ENCODE measurements at regions of chr1 and their contacts with region 1.

Region 1: GRCh38 chr1:45011837-45012638 is at the start of gene UROD:
- DNase-seq: peak; percentile 77 to 96 (median 86)
- ATAC-seq: peak; percentile 83
- H3K4me3 ChIP-seq: peak within 1 kb of the TSS; percentile 56 to 82
- H3K4me3 Mint-ChIP-seq: peak within 1 kb of the TSS; percentile 89
- H3K27ac ChIP-seq: peak within 1 kb of the TSS; percentile 61 to 77
- H3K27ac Mint-ChIP-seq: peak within 1 kb of the TSS; percentile 95
- H3K4me1 ChIP-seq: peaks cover 30% of the 10 kb centered on the region
- H3K4me1 Mint-ChIP-seq: peaks cover 52% of the 10 kb centered on the region
- H3K27me3 ChIP-seq: no peaks in the 10 kb centered on the region
- H3K27me3 Mint-ChIP-seq: no peaks in the 10 kb centered on the region
- CTCF ChIP-seq: no peak
- total RNA-seq, gene UROD: 38.3 to 41.2 TPM

Region 2: GRCh38 chr1:44730741-44731512 is 281.1 kb before region 1 on chr1 and contains the start of gene RNU5D-1:
- CTCF ChIA-PET with region 1: interaction called, 6 read pairs
- POLR2A ChIA-PET with region 1: interaction called, 6 read pairs
- intact Hi-C with region 1: loop called (anchors 2 to 10 kb)
- DNase-seq: peak; percentile 86 to 96 (median 94)
- ATAC-seq: peak; percentile 75
- H3K4me3 ChIP-seq: peak within 1 kb of the TSS; percentile 36 to 47
- H3K4me3 Mint-ChIP-seq: peak within 1 kb of the TSS; percentile 84
- H3K27ac ChIP-seq: peak within 1 kb of the TSS; percentile 98 to 99
- H3K27ac Mint-ChIP-seq: peak within 1 kb of the TSS; percentile 100
- H3K4me1 ChIP-seq: peaks cover 14% of the 10 kb centered on the region
- H3K4me1 Mint-ChIP-seq: peaks cover 36% of the 10 kb centered on the region
- H3K27me3 ChIP-seq: no peaks in the 10 kb centered on the region
- H3K27me3 Mint-ChIP-seq: no peaks in the 10 kb centered on the region
- CTCF ChIP-seq: peak; percentile 93
- total RNA-seq, gene RNU5D-1: not detected

Region 3: GRCh38 chr1:44799770-44800584 is 212.1 kb before region 1 on chr1 and contains the start of gene PLK3:
- CTCF ChIA-PET with region 1: interaction called, 4 read pairs
- POLR2A ChIA-PET with region 1: interaction called, 19 read pairs
- intact Hi-C with region 1: loop called in 1 of 2 experiments (anchors 2 kb)
- DNase-seq: peak; percentile 97 to 99 (median 98)
- ATAC-seq: peak; percentile 83
- H3K4me3 ChIP-seq: peak within 1 kb of the TSS; percentile 79 to 95
- H3K4me3 Mint-ChIP-seq: peak within 1 kb of the TSS; percentile 87
- H3K27ac ChIP-seq: peak within 1 kb of the TSS; percentile 91 to 98
- H3K27ac Mint-ChIP-seq: peak within 1 kb of the TSS; percentile 98
- H3K4me1 ChIP-seq: peaks cover 29% of the 10 kb centered on the region
- H3K4me1 Mint-ChIP-seq: peaks cover 37% of the 10 kb centered on the region
- H3K27me3 ChIP-seq: no peaks in the 10 kb centered on the region
- H3K27me3 Mint-ChIP-seq: no peaks in the 10 kb centered on the region
- CTCF ChIP-seq: peak; percentile 81
- total RNA-seq, gene PLK3: 568 to 599 TPM

Region 4: GRCh38 chr1:45205910-45206721 is 194.1 kb after region 1 on chr1 and contains the start of gene ZSWIM5:
- CTCF ChIA-PET with region 1: interaction called, 5 read pairs
- POLR2A ChIA-PET with region 1: interaction called, 3 read pairs
- intact Hi-C with region 1: loop called in 1 of 2 experiments (anchors 2 kb)
- DNase-seq: peak; percentile 34 to 84 (median 61)
- ATAC-seq: peak; percentile 77
- H3K4me3 ChIP-seq: peak within 1 kb of the TSS; percentile 62 to 80
- H3K4me3 Mint-ChIP-seq: peak within 1 kb of the TSS; percentile 92
- H3K27ac ChIP-seq: peak within 1 kb of the TSS; percentile 34 to 37
- H3K27ac Mint-ChIP-seq: peak within 1 kb of the TSS; percentile 80
- H3K4me1 ChIP-seq: peaks cover 32% of the 10 kb centered on the region
- H3K4me1 Mint-ChIP-seq: peaks cover 33% of the 10 kb centered on the region
- H3K27me3 ChIP-seq: no peaks in the 10 kb centered on the region
- H3K27me3 Mint-ChIP-seq: peaks cover 8% of the 10 kb centered on the region
- CTCF ChIP-seq: no peak
- total RNA-seq, gene ZSWIM5: 1.0 to 1.8 TPM

Region 5: DNA sequence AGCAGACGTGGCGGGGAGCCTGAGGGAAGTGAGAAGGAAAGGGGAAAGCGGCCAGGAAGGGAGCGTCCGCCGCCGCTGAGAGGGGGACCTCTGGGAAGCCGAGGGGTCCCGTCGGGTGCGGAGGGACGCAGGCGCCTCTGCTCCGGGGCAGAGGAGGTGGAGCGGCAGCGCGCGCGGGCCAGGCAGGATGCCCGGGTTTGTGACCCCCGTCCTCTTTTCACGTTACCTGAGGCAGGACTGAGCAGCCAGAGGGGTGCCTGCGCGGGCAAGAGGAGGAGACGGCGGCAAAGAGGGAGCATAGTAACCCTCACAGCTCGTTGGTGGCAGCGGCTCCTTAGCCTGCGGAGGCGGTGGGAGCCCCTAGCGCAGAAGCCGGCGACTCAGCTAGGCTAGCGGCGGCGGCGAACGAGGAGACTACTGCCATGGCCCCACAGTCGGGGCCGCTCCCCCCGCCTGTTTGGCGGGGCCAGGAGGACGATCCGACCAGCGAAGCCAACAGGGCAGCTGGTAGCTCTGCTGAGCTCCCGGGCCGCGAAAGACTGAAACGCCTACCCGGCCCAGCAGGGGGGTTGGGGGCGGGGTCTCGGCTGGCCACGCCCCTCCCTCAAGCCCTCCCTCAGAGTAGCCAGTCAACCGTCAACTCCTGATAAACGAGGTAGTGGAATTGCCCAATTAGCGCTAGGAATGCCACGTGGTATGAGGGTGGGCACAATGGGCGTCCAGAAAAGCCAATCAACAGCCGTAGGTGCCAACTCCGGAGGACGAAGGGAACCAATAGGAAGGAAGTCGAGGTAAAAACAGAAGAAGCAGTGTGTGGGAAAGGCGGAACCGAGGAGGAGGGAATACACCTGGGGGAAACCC is 478.8 kb after region 1 on chr1 and contains the start of gene TESK2:
- CTCF ChIA-PET with region 1: interaction called, 116 read pairs
- POLR2A ChIA-PET with region 1: interaction called, 5 read pairs
- intact Hi-C with region 1: loop called in 1 of 2 experiments (anchors 1 kb)
- DNase-seq: peak; percentile 94 to 100 (median 95)
- ATAC-seq: peak; percentile 91
- H3K4me3 ChIP-seq: peak within 1 kb of the TSS; percentile 74 to 91
- H3K4me3 Mint-ChIP-seq: no peak within 1 kb of the TSS
- H3K27ac ChIP-seq: peak within 1 kb of the TSS; percentile 49 to 72
- H3K27ac Mint-ChIP-seq: no peak within 1 kb of the TSS
- H3K4me1 ChIP-seq: peaks cover 11% of the 10 kb centered on the region
- H3K4me1 Mint-ChIP-seq: peaks cover 16% of the 10 kb centered on the region
- H3K27me3 ChIP-seq: peaks cover 0 to 3% of the 10 kb centered on the region in 2 experiments
- H3K27me3 Mint-ChIP-seq: no peaks in the 10 kb centered on the region
- CTCF ChIP-seq: no peak
- total RNA-seq, gene TESK2: 4.6 to 5.8 TPM

Region 6: GRCh38 chr1:45569962-45570581 is 558.0 kb after region 1 on chr1:
- CTCF ChIA-PET with region 1: interaction called, 9 read pairs
- POLR2A ChIA-PET with region 1: no interaction called
- intact Hi-C with region 1: loop called (anchors 1 kb)
- DNase-seq: peak; percentile 33 to 83 (median 72)
- ATAC-seq: peak; percentile 99
- H3K4me3 ChIP-seq: no peak overlapping the region
- H3K4me3 Mint-ChIP-seq: no peak overlapping the region
- H3K27ac ChIP-seq: no peak overlapping the region
- H3K27ac Mint-ChIP-seq: peak overlapping the region; percentile 22
- H3K4me1 ChIP-seq: no peaks in the 10 kb centered on the region
- H3K4me1 Mint-ChIP-seq: no peaks in the 10 kb centered on the region
- H3K27me3 ChIP-seq: no peaks in the 10 kb centered on the region
- H3K27me3 Mint-ChIP-seq: no peaks in the 10 kb centered on the region
- CTCF ChIP-seq: peak; percentile 92

Measured in CD8-positive, alpha-beta T cell (primary cell).